ENCODE measurements at regions of chr3 and their contacts with region 1.

Region 1: DNA sequence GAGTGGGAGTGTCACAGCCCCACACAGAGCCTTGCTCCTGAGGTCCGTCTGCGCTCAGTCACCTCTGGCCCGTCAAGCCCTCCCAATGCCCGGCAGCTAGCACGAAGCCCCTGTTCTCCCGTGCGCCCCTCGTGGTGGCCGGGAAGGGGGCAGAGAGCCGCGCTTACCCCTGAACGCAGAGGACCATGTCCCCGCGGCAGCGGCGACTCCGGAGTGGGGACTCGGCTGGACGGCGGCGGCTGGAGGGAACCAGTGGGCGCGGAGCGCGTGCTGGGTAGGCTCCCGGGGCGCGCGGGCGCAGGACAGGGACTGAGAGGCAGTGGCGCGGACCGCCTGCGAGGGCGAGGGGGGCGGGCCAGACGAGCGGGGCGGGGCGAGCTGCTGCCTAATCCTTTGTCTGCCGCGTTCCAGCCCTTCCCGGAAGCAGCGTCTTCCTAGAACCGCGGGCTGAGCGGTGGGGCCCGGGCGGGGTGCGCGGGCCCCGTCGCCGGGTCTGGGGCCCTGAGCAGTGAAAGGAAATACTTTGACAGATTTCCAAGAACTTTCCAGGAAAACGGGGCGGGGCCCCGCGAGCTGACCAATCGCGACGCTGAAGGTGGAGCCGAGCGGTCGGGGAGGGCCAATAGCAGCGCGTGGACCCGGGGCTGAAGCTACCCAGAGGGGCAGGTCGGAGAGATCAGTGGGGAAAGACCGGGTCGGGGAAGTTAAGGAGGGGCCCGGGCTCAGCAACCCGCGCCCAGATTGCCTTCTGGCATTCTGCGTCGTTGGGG is at the start of gene CISH:
- DNase-seq: peak; percentile 99
- H3K4me3 Mint-ChIP-seq: peak within 1 kb of the TSS; percentile 98
- H3K27ac Mint-ChIP-seq: peak within 1 kb of the TSS; percentile 100
- H3K4me1 Mint-ChIP-seq: peaks cover 39% of the 10 kb centered on the region
- H3K27me3 Mint-ChIP-seq: peaks cover 6% of the 10 kb centered on the region
- total RNA-seq, gene CISH: 319 TPM

Region 2: DNA sequence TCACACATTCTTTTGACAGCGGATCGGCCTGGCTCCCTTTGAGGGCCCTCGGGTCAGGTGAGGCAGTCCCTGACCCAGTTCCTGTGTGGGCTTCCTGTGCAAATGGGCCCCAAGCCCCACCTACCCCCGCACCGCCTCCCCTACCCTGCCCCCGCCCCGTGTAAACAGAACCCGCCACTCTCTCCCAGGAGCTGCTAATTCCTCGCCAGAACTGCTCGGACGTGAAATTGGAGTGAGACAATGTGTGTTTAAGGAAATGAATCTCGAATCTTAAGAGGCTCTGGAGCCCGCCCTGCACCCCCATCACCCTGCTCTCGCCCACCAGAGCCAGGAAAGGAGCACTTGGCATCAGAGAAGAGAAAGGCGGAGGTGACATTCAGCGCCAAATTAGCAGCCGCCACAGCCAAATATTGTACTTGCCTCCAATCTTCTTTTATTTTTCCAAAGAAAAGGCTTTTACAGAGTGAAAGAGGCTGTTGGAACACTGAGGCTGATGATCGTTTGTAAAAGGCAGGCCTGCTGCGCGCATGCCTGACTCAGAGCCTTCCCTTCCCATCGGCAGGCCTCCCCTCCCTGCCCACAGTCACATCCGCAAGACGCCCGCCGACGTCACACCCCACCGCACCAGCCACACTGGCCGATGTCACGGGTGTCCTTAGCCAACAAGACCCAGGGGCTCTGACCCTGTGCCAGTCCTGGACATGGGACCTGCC is 161.3 kb before region 1 on chr3:
- CTCF ChIA-PET with region 1: interaction called, 3 read pairs
- POLR2A ChIA-PET with region 1: no interaction called
- intact Hi-C with region 1: loop called (anchors 5 kb)
- DNase-seq: peak; percentile 86
- H3K4me3 Mint-ChIP-seq: peak overlapping the region; percentile 65
- H3K27ac Mint-ChIP-seq: peak overlapping the region; percentile 79
- H3K4me1 Mint-ChIP-seq: peaks cover 11% of the 10 kb centered on the region
- H3K27me3 Mint-ChIP-seq: no peaks in the 10 kb centered on the region

Region 3: GRCh38 chr3:50568947-50569749 is 42.5 kb before region 1 on chr3 and contains the start of gene HEMK1:
- CTCF ChIA-PET with region 1: interaction called, 908 read pairs
- POLR2A ChIA-PET with region 1: interaction called, 1,013 read pairs
- intact Hi-C with region 1: loop called (anchors 1 kb)
- DNase-seq: peak; percentile 98
- H3K4me3 Mint-ChIP-seq: peak within 1 kb of the TSS; percentile 99
- H3K27ac Mint-ChIP-seq: peak within 1 kb of the TSS; percentile 95
- H3K4me1 Mint-ChIP-seq: peaks cover 56% of the 10 kb centered on the region
- H3K27me3 Mint-ChIP-seq: no peaks in the 10 kb centered on the region
- total RNA-seq, gene HEMK1: 78.7 to 82.6 TPM

Region 4: DNA sequence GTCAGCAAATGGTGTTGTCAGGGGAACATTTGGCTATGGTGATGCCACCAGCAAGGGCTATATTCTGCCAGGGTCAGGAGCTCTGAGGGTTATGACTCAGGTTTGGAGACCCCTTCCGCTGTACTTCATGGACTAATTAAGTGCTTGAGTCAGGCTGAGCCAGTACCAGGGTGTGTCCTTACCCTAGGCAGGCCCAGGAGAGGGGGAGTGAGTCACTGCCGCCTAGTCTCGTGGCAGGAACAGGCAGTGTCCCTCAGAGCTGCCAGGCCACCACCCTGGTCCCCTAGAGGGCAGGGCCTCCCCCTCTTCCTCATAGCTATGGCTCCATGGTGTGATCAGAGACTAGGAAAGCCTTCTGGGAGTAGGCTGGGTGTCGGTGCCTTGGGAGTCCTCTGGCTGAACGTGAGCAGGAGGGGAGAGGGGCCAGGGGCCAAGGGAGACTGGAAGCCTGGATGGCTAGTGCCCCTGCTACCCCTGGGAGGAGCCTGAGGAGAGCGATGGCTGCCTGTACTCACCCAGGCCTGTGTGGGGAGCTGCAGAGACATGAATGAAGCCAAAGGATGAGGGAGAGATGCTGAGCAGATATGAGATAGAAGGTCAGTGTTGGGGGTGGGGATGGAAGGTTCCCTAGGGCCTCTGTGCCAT is 15.9 kb after region 1 on chr3:
- CTCF ChIA-PET with region 1: interaction called, 34 read pairs
- POLR2A ChIA-PET with region 1: interaction called, 9 read pairs
- intact Hi-C with region 1: no loop called
- DNase-seq: peak; percentile 59
- H3K4me3 Mint-ChIP-seq: no peak overlapping the region
- H3K27ac Mint-ChIP-seq: peak overlapping the region; percentile 84
- H3K4me1 Mint-ChIP-seq: peaks cover 98% of the 10 kb centered on the region
- H3K27me3 Mint-ChIP-seq: no peaks in the 10 kb centered on the region

Region 5: DNA sequence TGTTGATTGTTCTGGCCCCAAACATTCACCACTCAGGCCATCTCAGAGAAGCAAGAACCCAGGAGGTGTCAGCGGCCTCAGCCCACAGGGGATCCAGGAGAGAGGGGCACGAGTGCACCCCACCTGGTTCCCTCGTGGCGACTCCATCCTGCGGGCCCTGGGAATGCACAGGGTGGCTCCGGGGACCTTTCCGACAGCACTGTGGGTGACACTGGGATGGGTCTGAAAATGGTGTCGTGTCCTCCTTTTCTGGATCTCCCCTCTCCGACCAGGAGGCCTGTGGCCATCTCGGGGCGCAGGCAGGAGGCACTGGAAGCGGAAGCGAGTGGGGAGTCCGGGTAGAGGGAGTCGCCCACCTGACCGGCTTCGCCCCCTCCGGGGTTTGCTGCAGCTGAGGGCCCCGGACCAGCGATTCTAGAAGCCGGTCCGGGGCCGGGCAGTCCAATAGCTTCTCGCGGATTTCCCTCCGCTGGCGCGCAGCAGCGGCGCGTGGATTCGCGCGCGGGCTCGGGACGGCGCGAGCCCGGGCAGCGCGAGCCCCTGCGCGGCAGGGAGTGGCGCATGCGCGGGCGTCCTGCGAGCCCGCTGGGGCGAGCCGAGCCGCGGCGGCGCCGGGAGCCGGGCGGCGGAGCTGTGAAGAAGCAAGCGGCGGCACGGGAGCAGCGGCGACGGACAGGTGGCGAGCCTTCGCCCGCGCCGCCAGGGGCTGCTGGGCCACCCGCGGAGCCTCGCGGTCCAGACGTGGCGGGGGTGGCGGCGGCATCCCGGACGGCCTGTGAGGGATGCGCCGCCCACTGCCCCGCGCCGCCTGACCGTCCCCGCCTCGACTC is 62.9 kb after region 1 on chr3 and contains the start of gene DOCK3:
- CTCF ChIA-PET with region 1: interaction called, 43 read pairs
- POLR2A ChIA-PET with region 1: interaction called, 4 read pairs
- intact Hi-C with region 1: no loop called
- DNase-seq: peak; percentile 65
- H3K4me3 Mint-ChIP-seq: peak within 1 kb of the TSS; percentile 68
- H3K27ac Mint-ChIP-seq: peak within 1 kb of the TSS; percentile 28
- H3K4me1 Mint-ChIP-seq: peaks cover 11% of the 10 kb centered on the region
- H3K27me3 Mint-ChIP-seq: peaks cover 25% of the 10 kb centered on the region
- total RNA-seq, gene DOCK3: 2.7 to 2.9 TPM

Region 6: DNA sequence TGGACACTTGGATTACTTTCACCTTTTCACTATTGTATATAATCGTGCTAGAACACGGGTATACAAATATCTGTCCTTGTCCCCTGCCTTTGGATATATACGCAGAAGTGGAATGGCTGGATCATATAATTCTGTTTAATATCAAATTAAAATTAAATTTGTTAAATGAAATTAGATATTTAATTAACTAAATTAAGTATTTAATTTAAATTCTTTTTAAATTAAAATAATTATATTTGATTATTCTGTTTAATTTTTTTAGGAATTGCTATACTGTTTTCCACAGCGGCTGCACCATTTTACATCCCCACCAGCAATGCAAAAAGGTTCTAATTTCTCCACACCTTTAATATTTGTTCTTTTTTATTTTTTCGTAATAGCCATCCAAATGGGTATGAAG is 147.4 kb after region 1 on chr3:
- CTCF ChIA-PET with region 1: no interaction called
- POLR2A ChIA-PET with region 1: no interaction called
- intact Hi-C with region 1: no loop called
- DNase-seq: no peak
- H3K4me3 Mint-ChIP-seq: no peak overlapping the region
- H3K27ac Mint-ChIP-seq: no peak overlapping the region
- H3K4me1 Mint-ChIP-seq: no peaks in the 10 kb centered on the region
- H3K27me3 Mint-ChIP-seq: no peaks in the 10 kb centered on the region

Region 7: DNA sequence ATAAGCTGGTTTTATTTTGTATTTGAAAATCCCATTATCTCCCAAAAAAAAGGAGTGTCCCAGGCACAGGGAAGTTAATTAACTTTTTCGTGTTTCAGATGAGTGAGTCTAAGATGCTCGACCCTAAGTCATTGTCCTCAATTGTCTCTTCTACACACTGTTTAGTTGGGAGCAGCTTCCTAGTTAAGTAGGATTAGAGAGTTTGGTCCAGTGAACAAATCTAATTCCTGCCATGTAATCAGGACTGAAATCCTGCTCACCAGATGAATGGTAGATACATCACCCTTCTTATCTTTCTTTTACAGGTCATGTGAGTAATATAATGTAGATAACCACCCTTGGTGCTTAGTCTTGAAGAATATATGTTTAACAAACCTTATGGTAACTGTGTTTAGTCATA is 544.5 kb after region 1 on chr3:
- CTCF ChIA-PET with region 1: no interaction called
- POLR2A ChIA-PET with region 1: no interaction called
- intact Hi-C with region 1: no loop called
- DNase-seq: no peak
- H3K4me3 Mint-ChIP-seq: no peak overlapping the region
- H3K27ac Mint-ChIP-seq: no peak overlapping the region
- H3K4me1 Mint-ChIP-seq: no peaks in the 10 kb centered on the region
- H3K27me3 Mint-ChIP-seq: peaks cover 1% of the 10 kb centered on the region

Region 8: GRCh38 chr3:51391075-51391567 is 779.5 kb after region 1 on chr3 and contains the start of gene RBM15B:
- CTCF ChIA-PET with region 1: interaction called, 19 read pairs
- POLR2A ChIA-PET with region 1: no interaction called
- intact Hi-C with region 1: no loop called
- DNase-seq: peak; percentile 98
- H3K4me3 Mint-ChIP-seq: peak within 1 kb of the TSS; percentile 86
- H3K27ac Mint-ChIP-seq: peak within 1 kb of the TSS; percentile 87
- H3K4me1 Mint-ChIP-seq: peaks cover 81% of the 10 kb centered on the region
- H3K27me3 Mint-ChIP-seq: no peaks in the 10 kb centered on the region
- total RNA-seq, gene RBM15B: 19.0 to 19.4 TPM

Measured in activated CD4-positive, alpha-beta memory T cell treated with anti-CD3 and anti-CD28 coated beads for 36 hours (primary cell).